CD8-positive, alpha-beta T cell (primary cell): ENCODE measurements at regions of chr11 and their contacts with region 1.

Region 1: DNA sequence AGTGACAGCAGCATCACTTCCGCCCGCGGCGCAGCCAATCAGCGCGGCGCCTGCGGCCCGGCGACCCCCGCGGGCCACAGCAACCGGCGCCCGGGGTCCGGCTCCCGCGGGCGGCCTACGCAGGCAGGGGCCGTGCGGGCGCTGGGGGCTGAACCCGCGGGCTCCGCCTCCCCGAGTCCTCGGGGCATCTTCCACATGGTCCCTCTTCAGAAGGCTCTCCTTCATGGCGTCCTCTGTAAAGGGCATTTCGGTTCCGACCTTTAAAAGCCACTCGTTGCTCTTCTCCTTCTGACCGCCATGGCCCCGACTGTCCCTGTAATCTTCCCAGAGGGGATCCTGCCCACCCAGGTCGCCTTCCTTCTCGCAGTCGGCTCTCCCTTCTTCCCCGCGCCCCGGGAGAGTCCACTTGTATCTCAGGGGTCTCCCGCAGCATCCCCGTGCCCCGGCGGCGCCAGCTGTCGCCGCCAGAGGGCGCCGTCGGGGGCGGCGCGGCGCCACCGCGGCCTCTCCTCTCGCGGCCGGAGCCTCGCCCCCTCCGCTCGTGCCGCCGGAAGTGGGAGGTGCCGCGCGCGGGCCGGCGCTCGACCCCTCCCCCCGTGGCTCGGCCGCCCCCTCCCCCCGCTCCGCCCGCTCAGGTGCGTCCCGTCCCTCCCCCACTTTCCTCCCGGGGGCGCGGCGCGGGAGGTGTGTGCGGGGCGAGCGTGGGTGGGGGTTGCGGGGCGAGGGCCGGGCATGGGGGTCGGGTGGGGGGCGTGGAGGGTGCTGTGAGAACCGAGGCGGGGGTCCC is at the start of gene RNF214:
- DNase-seq: peak; percentile 51 to 89 (median 72)
- ATAC-seq: peak; percentile 75
- H3K4me3 ChIP-seq: peak within 1 kb of the TSS; percentile 70 to 91
- H3K4me3 Mint-ChIP-seq: peak within 1 kb of the TSS; percentile 96
- H3K27ac ChIP-seq: peak within 1 kb of the TSS; percentile 94 to 97
- H3K27ac Mint-ChIP-seq: peak within 1 kb of the TSS; percentile 98
- H3K4me1 ChIP-seq: peaks cover 30% of the 10 kb centered on the region
- H3K4me1 Mint-ChIP-seq: peaks cover 44% of the 10 kb centered on the region
- H3K27me3 ChIP-seq: no peaks in the 10 kb centered on the region
- H3K27me3 Mint-ChIP-seq: no peaks in the 10 kb centered on the region
- CTCF ChIP-seq: peak; percentile 64
- total RNA-seq, gene RNF214: 10.8 to 11.7 TPM

Region 2: GRCh38 chr11:116787786-116788486 is 444.3 kb before region 1 on chr11 and contains the start of gene ZPR1:
- CTCF ChIA-PET with region 1: interaction called, 16 read pairs
- POLR2A ChIA-PET with region 1: interaction called, 3 read pairs
- intact Hi-C with region 1: loop called in 1 of 2 experiments (anchors 1 kb)
- DNase-seq: peak; percentile 69 to 91 (median 87)
- ATAC-seq: peak; percentile 80
- H3K4me3 ChIP-seq: peak within 1 kb of the TSS; percentile 60 to 94
- H3K4me3 Mint-ChIP-seq: peak within 1 kb of the TSS; percentile 95
- H3K27ac ChIP-seq: peak within 1 kb of the TSS; percentile 80 to 95
- H3K27ac Mint-ChIP-seq: peak within 1 kb of the TSS; percentile 91
- H3K4me1 ChIP-seq: peaks cover 29% of the 10 kb centered on the region
- H3K4me1 Mint-ChIP-seq: peaks cover 54% of the 10 kb centered on the region
- H3K27me3 ChIP-seq: no peaks in the 10 kb centered on the region
- H3K27me3 Mint-ChIP-seq: no peaks in the 10 kb centered on the region
- CTCF ChIP-seq: no peak
- total RNA-seq, gene ZPR1: 132 to 134 TPM

Region 3: GRCh38 chr11:117143871-117144476 is 88.3 kb before region 1 on chr11 and contains the start of gene PAFAH1B2:
- CTCF ChIA-PET with region 1: interaction called, 4 read pairs
- POLR2A ChIA-PET with region 1: interaction called, 12 read pairs
- intact Hi-C with region 1: loop called (anchors 1 kb)
- DNase-seq: peak; percentile 87 to 97 (median 95)
- ATAC-seq: peak; percentile 82
- H3K4me3 ChIP-seq: peak within 1 kb of the TSS; percentile 74 to 78
- H3K4me3 Mint-ChIP-seq: peak within 1 kb of the TSS; percentile 95
- H3K27ac ChIP-seq: peak within 1 kb of the TSS; percentile 69 to 75
- H3K27ac Mint-ChIP-seq: peak within 1 kb of the TSS; percentile 95
- H3K4me1 ChIP-seq: peaks cover 16% of the 10 kb centered on the region
- H3K4me1 Mint-ChIP-seq: peaks cover 44% of the 10 kb centered on the region
- H3K27me3 ChIP-seq: peaks cover 0 to 3% of the 10 kb centered on the region in 2 experiments
- H3K27me3 Mint-ChIP-seq: peaks cover 5% of the 10 kb centered on the region
- CTCF ChIP-seq: no peak
- total RNA-seq, gene PAFAH1B2: 52.1 to 55.9 TPM

Region 4: GRCh38 chr11:117178210-117179034 is 53.9 kb before region 1 on chr11 and contains the start of gene SIDT2:
- CTCF ChIA-PET with region 1: interaction called, 61 read pairs
- POLR2A ChIA-PET with region 1: interaction called, 22 read pairs
- intact Hi-C with region 1: loop called (anchors 1 kb)
- DNase-seq: peak; percentile 78 to 94 (median 90)
- ATAC-seq: peak; percentile 92
- H3K4me3 ChIP-seq: peak within 1 kb of the TSS; percentile 57 to 76
- H3K4me3 Mint-ChIP-seq: peak within 1 kb of the TSS; percentile 96
- H3K27ac ChIP-seq: peak within 1 kb of the TSS; percentile 50 to 80
- H3K27ac Mint-ChIP-seq: peak within 1 kb of the TSS; percentile 97
- H3K4me1 ChIP-seq: peaks cover 24% of the 10 kb centered on the region
- H3K4me1 Mint-ChIP-seq: peaks cover 29% of the 10 kb centered on the region
- H3K27me3 ChIP-seq: no peaks in the 10 kb centered on the region
- H3K27me3 Mint-ChIP-seq: no peaks in the 10 kb centered on the region
- CTCF ChIP-seq: no peak
- total RNA-seq, gene SIDT2: 133 to 134 TPM

Region 5: DNA sequence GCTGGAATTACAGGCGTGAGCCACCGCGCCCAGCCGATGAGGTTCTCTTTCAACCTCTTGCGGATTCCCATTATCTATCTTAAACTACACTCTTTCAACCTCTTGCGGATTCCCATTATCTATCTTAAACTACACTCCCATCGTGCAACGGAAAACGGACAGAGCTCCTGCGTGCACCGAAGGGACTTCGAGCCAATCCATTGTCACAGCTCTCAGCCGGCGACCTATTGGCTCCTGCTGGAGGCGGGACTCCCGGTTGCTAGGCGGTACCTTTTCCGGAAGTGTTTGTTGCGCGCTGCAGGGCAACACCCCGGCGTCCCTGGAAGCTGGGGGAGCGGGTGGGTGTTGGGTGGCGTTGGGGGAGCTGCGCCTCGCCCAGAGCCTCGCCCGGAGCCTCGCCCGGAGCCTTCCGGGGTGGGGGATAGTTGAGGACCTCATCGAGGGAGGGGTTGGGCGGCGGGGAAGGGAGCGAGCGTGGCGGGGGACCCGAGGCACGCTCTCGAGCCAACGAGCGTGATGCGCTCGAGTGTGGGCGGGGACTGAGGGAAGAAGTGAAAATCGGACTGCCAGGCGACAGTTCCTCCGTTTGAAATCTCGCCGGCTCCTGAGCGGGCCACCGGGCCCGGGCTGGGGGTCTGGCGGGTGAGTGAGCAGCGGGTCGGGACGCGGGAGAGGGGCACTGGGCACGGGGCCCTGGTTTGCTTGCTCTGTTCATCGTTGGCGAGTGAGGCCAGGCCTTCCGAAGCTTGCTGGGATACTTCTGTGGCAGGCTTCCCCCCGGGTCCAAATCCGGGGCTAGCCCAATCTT is 95.5 kb after region 1 on chr11 and contains the start of gene CEP164:
- CTCF ChIA-PET with region 1: no interaction called
- POLR2A ChIA-PET with region 1: interaction called, 8 read pairs
- intact Hi-C with region 1: loop called (anchors 1 kb)
- DNase-seq: peak; percentile 90 to 97 (median 95)
- ATAC-seq: peak; percentile 90
- H3K4me3 ChIP-seq: peak within 1 kb of the TSS; percentile 64 to 91
- H3K4me3 Mint-ChIP-seq: no peak within 1 kb of the TSS
- H3K27ac ChIP-seq: peak within 1 kb of the TSS; percentile 92 to 94
- H3K27ac Mint-ChIP-seq: no peak within 1 kb of the TSS
- H3K4me1 ChIP-seq: peaks cover 9% of the 10 kb centered on the region
- H3K4me1 Mint-ChIP-seq: peaks cover 9% of the 10 kb centered on the region
- H3K27me3 ChIP-seq: no peaks in the 10 kb centered on the region
- H3K27me3 Mint-ChIP-seq: no peaks in the 10 kb centered on the region
- CTCF ChIP-seq: no peak
- total RNA-seq, gene CEP164: 23.9 to 28.4 TPM

Region 6: DNA sequence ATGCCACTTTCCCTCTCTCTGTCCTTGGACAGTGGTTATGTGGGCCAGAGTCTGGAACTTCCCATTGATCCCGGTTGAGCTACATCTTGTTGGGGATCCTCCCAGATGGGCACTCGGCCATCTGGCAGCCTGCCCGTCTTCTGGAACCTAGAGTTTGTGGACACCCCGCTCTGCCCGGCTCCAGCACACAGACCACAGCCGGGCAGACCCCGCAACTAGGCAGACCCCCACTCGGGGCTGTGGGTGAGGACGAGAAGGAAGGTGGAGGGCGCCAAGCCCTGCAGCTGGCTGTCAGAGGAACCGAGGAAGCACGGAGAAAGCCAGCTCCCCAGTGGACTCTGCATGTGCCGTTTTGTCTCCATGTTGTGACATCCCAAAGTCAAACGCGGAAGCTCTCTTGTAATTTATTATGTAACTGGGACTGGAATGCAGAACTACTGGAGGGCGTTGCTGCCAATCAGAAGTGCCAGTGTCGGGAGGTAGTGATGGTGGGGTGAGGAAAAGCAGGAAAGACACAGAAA is 303.0 kb after region 1 on chr11:
- CTCF ChIA-PET with region 1: no interaction called
- POLR2A ChIA-PET with region 1: no interaction called
- intact Hi-C with region 1: no loop called
- DNase-seq: no peak
- ATAC-seq: no peak
- H3K4me3 ChIP-seq: no peak overlapping the region
- H3K4me3 Mint-ChIP-seq: no peak overlapping the region
- H3K27ac ChIP-seq: no peak overlapping the region
- H3K27ac Mint-ChIP-seq: no peak overlapping the region
- H3K4me1 ChIP-seq: no peaks in the 10 kb centered on the region
- H3K4me1 Mint-ChIP-seq: no peaks in the 10 kb centered on the region
- H3K27me3 ChIP-seq: no peaks in the 10 kb centered on the region
- H3K27me3 Mint-ChIP-seq: peaks cover 9% of the 10 kb centered on the region
- CTCF ChIP-seq: no peak

Region 7: DNA sequence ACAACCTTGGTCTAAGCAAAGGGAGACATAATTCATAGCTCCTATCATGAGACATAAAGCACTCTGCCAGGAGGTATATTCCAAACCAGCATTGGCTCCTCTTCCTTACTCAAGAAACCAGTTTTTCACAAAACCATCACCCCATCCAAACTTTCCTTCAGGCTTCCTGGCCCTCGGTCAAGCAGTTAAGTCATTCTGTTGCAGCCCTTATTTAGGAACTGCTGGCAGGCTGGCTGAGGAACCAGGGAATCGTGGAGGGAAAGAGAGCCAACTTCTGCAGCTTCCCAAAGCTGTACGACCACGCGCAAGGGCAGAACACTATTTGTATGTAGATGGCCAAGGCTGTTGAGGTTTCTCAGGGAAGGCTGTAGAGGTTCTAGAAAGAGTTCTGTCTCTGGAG is 1332.8 kb after region 1 on chr11:
- CTCF ChIA-PET with region 1: no interaction called
- POLR2A ChIA-PET with region 1: no interaction called
- intact Hi-C with region 1: loop called (anchors 5 to 10 kb)
- DNase-seq: peak in 2 of 9 experiments; percentile 15 to 47
- ATAC-seq: no peak
- H3K4me3 ChIP-seq: no peak overlapping the region
- H3K4me3 Mint-ChIP-seq: peak overlapping the region; percentile 71
- H3K27ac ChIP-seq: no peak overlapping the region
- H3K27ac Mint-ChIP-seq: peak overlapping the region; percentile 78
- H3K4me1 ChIP-seq: peaks cover 5% of the 10 kb centered on the region
- H3K4me1 Mint-ChIP-seq: peaks cover 22% of the 10 kb centered on the region
- H3K27me3 ChIP-seq: no peaks in the 10 kb centered on the region
- H3K27me3 Mint-ChIP-seq: no peaks in the 10 kb centered on the region
- CTCF ChIP-seq: no peak